ENCODE measurements at regions of chr10 and their contacts with region 1.

Region 1: GRCh38 chr10:110210674-110211464 is 3.5 kb downstream of the MXI1 start:
- DNase-seq: peak in 1 of 2 donors; percentile 99
- H3K4me3 ChIP-seq: peak overlapping the region; percentile 78 to 83
- H3K27ac ChIP-seq: peak overlapping the region; percentile 98
- H3K4me1 ChIP-seq: peaks cover 20% of the 10 kb centered on the region
- H3K27me3 ChIP-seq: no peaks in the 10 kb centered on the region
- CTCF ChIP-seq: no peak
- POLR2A ChIP-seq: peak in 1 of 2 donors; percentile 84

Region 2: GRCh38 chr10:109737626-109738025 is 473.2 kb before region 1 on chr10:
- intact Hi-C with region 1: no loop called
- DNase-seq: no peak
- H3K4me3 ChIP-seq: no peak overlapping the region
- H3K27ac ChIP-seq: no peak overlapping the region
- H3K4me1 ChIP-seq: no peaks in the 10 kb centered on the region
- H3K27me3 ChIP-seq: no peaks in the 10 kb centered on the region
- CTCF ChIP-seq: no peak
- POLR2A ChIP-seq: no peak

Region 3: GRCh38 chr10:110137142-110137545 is 73.7 kb before region 1 on chr10:
- intact Hi-C with region 1: loop called (anchors 5 kb)
- DNase-seq: no peak
- H3K4me3 ChIP-seq: no peak overlapping the region
- H3K27ac ChIP-seq: peak overlapping the region; percentile 19
- H3K4me1 ChIP-seq: peaks cover 21% of the 10 kb centered on the region
- H3K27me3 ChIP-seq: no peaks in the 10 kb centered on the region
- CTCF ChIP-seq: peak; percentile 69 to 94 (median 92)
- POLR2A ChIP-seq: no peak

Region 4: DNA sequence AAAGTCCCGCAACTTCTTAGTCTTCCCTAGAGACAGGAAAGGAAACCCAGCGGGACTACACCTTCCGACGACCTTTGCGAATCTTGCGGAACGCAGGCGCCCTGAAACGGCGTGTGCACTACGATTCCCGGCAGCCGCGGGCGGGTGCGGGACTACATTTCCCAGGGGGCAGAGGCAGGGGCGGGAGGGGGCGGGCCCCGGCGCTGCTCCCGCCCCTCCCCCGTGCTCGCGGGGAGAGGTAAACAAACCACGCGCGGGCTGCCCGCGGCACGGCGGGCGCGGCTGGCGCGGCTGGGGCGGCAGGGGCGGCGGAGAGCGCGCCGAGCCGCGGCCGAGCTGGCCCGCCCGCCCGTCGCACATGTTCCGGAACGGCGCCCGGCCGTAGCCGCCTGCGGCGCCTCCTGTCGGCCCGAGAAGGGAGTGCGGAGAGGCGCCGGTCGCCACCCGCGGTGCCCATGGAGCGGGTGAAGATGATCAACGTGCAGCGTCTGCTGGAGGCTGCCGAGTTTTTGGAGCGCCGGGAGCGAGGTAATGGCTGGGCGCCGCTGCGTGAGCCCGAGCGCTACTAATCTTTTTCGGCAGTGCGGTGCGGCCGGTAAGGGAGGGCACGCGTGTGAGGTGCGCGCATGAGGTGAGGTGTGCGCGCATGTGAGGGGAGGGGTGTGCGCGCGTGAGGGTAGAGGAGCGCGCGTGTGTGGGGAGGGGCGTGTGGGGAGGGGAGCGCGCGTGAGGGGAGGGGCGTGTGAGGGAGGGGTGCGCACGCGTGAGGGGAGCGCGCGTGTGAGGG is 15.1 kb after region 1 on chr10:
- intact Hi-C with region 1: loop called (anchors 2 kb)
- DNase-seq: no peak
- H3K4me3 ChIP-seq: peak overlapping the region; percentile 79 to 93
- H3K27ac ChIP-seq: peak overlapping the region; percentile 96
- H3K4me1 ChIP-seq: peaks cover 23% of the 10 kb centered on the region
- H3K27me3 ChIP-seq: no peaks in the 10 kb centered on the region
- CTCF ChIP-seq: peak; percentile 50 to 71 (median 67)
- POLR2A ChIP-seq: peak in 1 of 2 donors; percentile 3

Region 5: DNA sequence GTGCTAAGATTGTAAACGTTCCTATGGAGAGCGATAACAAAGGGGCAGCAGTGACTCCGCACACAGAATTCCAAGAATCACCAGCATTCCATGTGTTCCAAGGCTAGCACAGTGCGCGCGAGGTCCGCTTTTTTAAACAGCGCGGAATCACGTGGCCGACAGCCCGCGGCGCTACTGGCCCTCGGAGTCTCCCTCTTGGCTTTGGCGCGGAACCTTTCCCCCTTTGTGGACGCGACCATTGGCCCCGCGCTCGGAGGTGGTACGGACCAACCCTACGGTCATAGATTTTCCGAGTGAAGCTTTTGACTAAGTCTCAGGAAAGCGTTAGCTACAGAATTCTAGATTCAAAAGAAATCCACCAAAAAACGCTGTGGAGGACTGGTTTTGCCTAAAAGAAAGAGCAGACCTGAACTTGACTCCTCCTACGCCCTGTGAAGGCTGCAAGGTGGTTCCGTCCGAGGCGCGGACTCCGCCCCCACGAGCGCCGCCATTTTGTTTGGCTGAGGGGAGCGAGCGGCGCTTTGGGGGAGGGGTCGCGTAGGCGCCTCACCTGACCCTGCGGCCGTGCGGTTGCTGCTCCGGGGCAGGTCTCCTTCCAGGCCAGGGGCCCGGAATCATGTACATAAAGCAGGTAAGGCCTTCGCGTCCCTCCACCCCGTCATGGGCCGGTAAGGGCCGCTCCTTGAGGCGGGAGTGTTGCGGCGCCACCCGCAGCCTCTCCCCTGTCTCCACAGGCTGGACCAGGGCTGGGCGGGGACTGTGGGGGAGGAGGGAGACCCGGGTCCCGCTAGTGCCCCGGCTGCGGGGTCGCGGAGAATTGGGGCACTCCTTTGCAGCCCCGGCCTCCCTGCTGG is 356.6 kb after region 1 on chr10 and contains the start of gene SMC3:
- intact Hi-C with region 1: loop called (anchors 10 kb)
- DNase-seq: peak in 1 of 2 donors; percentile 90
- H3K4me3 ChIP-seq: peak within 1 kb of the TSS; percentile 94 to 95
- H3K27ac ChIP-seq: peak within 1 kb of the TSS; percentile 92
- H3K4me1 ChIP-seq: peaks cover 42% of the 10 kb centered on the region
- H3K27me3 ChIP-seq: no peaks in the 10 kb centered on the region
- CTCF ChIP-seq: peak in 1 of 3 experiments; percentile 17
- POLR2A ChIP-seq: peak in 1 of 2 donors; percentile 42
- total RNA-seq, gene SMC3: 27.5 TPM